Activated CD8-positive, alpha-beta T cell treated with anti-CD3 and anti-CD28 coated beads for 36 hours (primary cell): ENCODE measurements at regions of chr14 and their contacts with region 1.

Region 1: GRCh38 chr14:73785873-73786695 is 65.5 kb upstream of the PTGR2 start:
- DNase-seq: peak; percentile 81
- ATAC-seq: peak; percentile 54
- H3K4me3 Mint-ChIP-seq: peak overlapping the region; percentile 90
- H3K27ac Mint-ChIP-seq: peak overlapping the region; percentile 95
- H3K4me1 Mint-ChIP-seq: peaks cover 58% of the 10 kb centered on the region
- H3K27me3 Mint-ChIP-seq: no peaks in the 10 kb centered on the region
- CTCF ChIP-seq: peak; percentile 37

Region 2: GRCh38 chr14:73741386-73741875 is 44.7 kb before region 1 on chr14:
- CTCF ChIA-PET with region 1: interaction called, 3 read pairs
- POLR2A ChIA-PET with region 1: interaction called, 59 read pairs
- intact Hi-C with region 1: no loop called
- DNase-seq: peak; percentile 83
- ATAC-seq: peak; percentile 73
- H3K4me3 Mint-ChIP-seq: peak overlapping the region; percentile 74
- H3K27ac Mint-ChIP-seq: peak overlapping the region; percentile 98
- H3K4me1 Mint-ChIP-seq: peaks cover 71% of the 10 kb centered on the region
- H3K27me3 Mint-ChIP-seq: no peaks in the 10 kb centered on the region
- CTCF ChIP-seq: no peak

Region 3: GRCh38 chr14:73771848-73772638 is 14.0 kb before region 1 on chr14:
- CTCF ChIA-PET with region 1: interaction called, 76 read pairs
- POLR2A ChIA-PET with region 1: interaction called, 211 read pairs
- intact Hi-C with region 1: loop called (anchors 2 kb)
- DNase-seq: peak; percentile 96
- ATAC-seq: peak; percentile 81
- H3K4me3 Mint-ChIP-seq: peak overlapping the region; percentile 41
- H3K27ac Mint-ChIP-seq: peak overlapping the region; percentile 92
- H3K4me1 Mint-ChIP-seq: peaks cover 73% of the 10 kb centered on the region
- H3K27me3 Mint-ChIP-seq: no peaks in the 10 kb centered on the region
- CTCF ChIP-seq: no peak

Region 4: GRCh38 chr14:73825551-73826188 is 39.6 kb after region 1 on chr14:
- CTCF ChIA-PET with region 1: interaction called, 10 read pairs
- POLR2A ChIA-PET with region 1: interaction called, 4 read pairs
- intact Hi-C with region 1: no loop called
- DNase-seq: peak; percentile 88
- ATAC-seq: peak; percentile 85
- H3K4me3 Mint-ChIP-seq: no peak overlapping the region
- H3K27ac Mint-ChIP-seq: no peak overlapping the region
- H3K4me1 Mint-ChIP-seq: peaks cover 19% of the 10 kb centered on the region
- H3K27me3 Mint-ChIP-seq: no peaks in the 10 kb centered on the region
- CTCF ChIP-seq: peak; percentile 89

Region 5: DNA sequence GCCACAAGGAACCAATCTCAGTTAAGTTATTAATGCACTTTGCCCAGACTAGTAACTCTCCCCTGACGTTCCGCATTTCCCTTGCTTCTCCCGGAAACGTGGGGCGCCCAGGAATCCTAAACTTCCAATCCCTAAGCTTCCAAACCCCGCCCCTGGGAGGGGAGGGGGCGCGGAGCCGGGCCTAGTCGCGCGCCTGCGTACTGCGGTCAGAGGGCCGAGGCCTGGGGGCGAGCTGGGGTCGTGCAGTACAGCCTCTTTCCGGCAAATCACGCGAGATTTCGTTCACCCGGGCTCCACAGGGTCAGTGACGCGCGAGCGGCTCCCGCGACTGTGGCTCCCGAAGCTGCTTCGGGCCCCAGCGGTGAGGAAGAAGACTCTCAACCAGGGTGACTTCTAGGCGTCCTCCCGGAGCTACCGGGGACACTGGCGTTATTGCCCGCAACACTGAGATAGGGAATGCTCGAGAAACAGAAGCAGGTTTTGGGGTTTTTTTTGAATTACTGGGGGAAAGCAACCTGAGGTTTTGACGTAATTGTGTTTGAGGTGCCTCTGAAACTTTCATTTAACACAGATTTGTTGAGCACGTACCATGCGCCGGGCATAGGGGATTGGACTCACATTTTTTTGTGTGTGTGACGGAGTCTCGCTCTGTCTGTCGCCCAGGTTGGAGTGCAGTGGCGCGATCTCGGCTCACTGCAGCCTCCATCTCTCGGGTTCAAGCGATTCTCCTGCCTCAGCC is 65.7 kb after region 1 on chr14 and contains the start of gene PTGR2:
- CTCF ChIA-PET with region 1: no interaction called
- POLR2A ChIA-PET with region 1: interaction called, 11 read pairs
- intact Hi-C with region 1: no loop called
- DNase-seq: peak; percentile 94
- ATAC-seq: peak; percentile 98
- H3K4me3 Mint-ChIP-seq: peak within 1 kb of the TSS; percentile 87
- H3K27ac Mint-ChIP-seq: peak within 1 kb of the TSS; percentile 99
- H3K4me1 Mint-ChIP-seq: peaks cover 15% of the 10 kb centered on the region
- H3K27me3 Mint-ChIP-seq: no peaks in the 10 kb centered on the region
- CTCF ChIP-seq: no peak
- total RNA-seq, gene PTGR2: 10.6 to 11.0 TPM